ENCODE measurements at regions of chr19 and their contacts with region 1.

Region 1: DNA sequence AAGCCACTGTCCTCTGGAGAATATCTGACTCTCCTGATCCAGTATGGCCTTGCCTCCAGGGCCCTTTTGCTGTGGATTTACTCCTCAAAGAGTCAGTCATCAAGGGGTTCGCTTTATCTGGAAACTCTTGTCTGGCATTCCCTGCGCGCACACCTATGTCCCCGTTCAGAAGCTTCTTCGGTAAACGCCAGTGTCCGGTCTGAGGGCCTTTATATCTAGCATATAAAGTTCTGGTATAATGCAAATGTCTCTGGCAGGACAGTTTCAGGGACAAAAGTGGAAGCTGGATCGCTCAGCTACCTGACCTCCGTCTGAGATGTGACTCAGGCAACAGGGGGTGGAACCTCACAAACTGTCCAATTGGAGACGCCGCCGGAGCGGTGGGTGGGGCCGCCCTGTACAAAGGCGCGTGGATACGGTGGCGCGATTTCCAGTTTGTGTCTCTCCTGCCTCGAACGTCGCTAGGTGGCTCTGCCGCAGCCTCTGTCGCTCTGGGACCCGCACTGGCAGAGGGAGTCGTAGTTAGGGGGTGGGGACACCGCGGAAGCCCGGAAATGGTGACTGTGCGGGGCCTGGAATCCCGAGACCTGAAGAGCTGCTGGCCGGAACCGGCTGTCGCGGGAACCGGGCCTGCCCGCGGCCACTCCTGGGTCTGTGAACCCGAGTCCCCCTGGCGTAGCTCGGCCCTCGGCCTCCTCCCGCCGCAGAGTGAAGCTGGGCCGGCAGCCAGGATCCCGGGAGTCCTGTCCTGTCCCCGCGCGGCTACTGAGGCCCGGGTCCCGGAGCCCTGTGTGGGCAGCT is 10.6 kb upstream of the ZNF709 start:
- DNase-seq: peak; percentile 74
- ATAC-seq: peak; percentile 100
- H3K4me3 ChIP-seq: peak overlapping the region; percentile 76
- H3K27ac ChIP-seq: peak overlapping the region; percentile 42; the same call in 1 of the 2 replicates
- H3K4me1 ChIP-seq: no peaks in the 10 kb centered on the region
- H3K27me3 ChIP-seq: no peaks in the 10 kb centered on the region
- CTCF ChIP-seq: peak; percentile 39 to 57 (median 50); a peak in 4 of 6 replicates
- EP300 ChIP-seq: no peak
- POLR2A ChIP-seq: peak; percentile 95
- RAD21 ChIP-seq: peak; percentile 28; the same call in 1 of the 2 replicates

Region 2: DNA sequence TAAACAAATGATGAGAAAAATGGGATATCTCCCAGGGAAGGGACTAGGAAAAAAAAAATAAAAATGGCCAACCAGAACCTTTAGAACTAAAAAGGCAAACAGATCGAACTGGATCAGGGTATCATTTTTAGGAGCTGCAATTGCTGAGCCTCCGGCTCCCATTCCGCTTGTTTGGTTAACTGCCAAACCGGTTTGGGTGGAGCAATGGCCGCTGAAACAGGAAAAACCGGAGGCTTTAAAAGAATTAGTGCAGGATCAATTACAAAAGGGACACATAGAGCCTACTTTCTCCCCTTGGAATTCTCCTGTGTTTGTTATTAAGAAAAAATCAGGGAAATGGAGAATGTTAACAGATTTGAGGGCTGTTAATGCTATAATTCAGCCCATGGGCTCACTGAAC is 41.7 kb before region 1 on chr19:
- CTCF ChIA-PET with region 1: no interaction called
- POLR2A ChIA-PET with region 1: no interaction called
- RAD21 ChIA-PET with region 1: no interaction called
- SMC1A ChIA-PET with region 1: no interaction called
- in situ Hi-C with region 1: no loop called
- intact Hi-C with region 1: no loop called
- DNase-seq: no peak
- ATAC-seq: no peak
- H3K4me3 ChIP-seq: no peak overlapping the region
- H3K27ac ChIP-seq: no peak overlapping the region
- H3K4me1 ChIP-seq: no peaks in the 10 kb centered on the region
- H3K27me3 ChIP-seq: no peaks in the 10 kb centered on the region
- CTCF ChIP-seq: no peak
- EP300 ChIP-seq: no peak
- POLR2A ChIP-seq: no peak
- RAD21 ChIP-seq: no peak

Region 3: GRCh38 chr19:12484011-12484370 is 11.2 kb before region 1 on chr19:
- CTCF ChIA-PET with region 1: interaction called, 4 read pairs
- POLR2A ChIA-PET with region 1: interaction called, 12 read pairs
- RAD21 ChIA-PET with region 1: interaction called, 6 read pairs
- SMC1A ChIA-PET with region 1: interaction called, 8 read pairs
- in situ Hi-C with region 1: no loop called
- intact Hi-C with region 1: no loop called
- DNase-seq: no peak
- ATAC-seq: no peak
- H3K4me3 ChIP-seq: peak overlapping the region; percentile 98
- H3K27ac ChIP-seq: peak overlapping the region; percentile 68
- H3K4me1 ChIP-seq: no peaks in the 10 kb centered on the region
- H3K27me3 ChIP-seq: no peaks in the 10 kb centered on the region
- CTCF ChIP-seq: no peak
- EP300 ChIP-seq: no peak
- POLR2A ChIP-seq: no peak
- RAD21 ChIP-seq: no peak

Region 4: GRCh38 chr19:12603714-12604113 is 108.5 kb after region 1 on chr19:
- CTCF ChIA-PET with region 1: no interaction called
- POLR2A ChIA-PET with region 1: no interaction called
- RAD21 ChIA-PET with region 1: no interaction called
- SMC1A ChIA-PET with region 1: no interaction called
- in situ Hi-C with region 1: no loop called
- intact Hi-C with region 1: no loop called
- DNase-seq: peak; percentile 69
- ATAC-seq: peak; percentile 99
- H3K4me3 ChIP-seq: no peak overlapping the region
- H3K27ac ChIP-seq: peak overlapping the region; percentile 9
- H3K4me1 ChIP-seq: peaks cover 17% of the 10 kb centered on the region
- H3K27me3 ChIP-seq: no peaks in the 10 kb centered on the region
- CTCF ChIP-seq: no peak
- EP300 ChIP-seq: no peak
- POLR2A ChIP-seq: no peak
- RAD21 ChIP-seq: no peak

Measured in GM12878 (cell line).